ENCODE measurements at regions of chr3 and their contacts with region 1.

Region 1: DNA sequence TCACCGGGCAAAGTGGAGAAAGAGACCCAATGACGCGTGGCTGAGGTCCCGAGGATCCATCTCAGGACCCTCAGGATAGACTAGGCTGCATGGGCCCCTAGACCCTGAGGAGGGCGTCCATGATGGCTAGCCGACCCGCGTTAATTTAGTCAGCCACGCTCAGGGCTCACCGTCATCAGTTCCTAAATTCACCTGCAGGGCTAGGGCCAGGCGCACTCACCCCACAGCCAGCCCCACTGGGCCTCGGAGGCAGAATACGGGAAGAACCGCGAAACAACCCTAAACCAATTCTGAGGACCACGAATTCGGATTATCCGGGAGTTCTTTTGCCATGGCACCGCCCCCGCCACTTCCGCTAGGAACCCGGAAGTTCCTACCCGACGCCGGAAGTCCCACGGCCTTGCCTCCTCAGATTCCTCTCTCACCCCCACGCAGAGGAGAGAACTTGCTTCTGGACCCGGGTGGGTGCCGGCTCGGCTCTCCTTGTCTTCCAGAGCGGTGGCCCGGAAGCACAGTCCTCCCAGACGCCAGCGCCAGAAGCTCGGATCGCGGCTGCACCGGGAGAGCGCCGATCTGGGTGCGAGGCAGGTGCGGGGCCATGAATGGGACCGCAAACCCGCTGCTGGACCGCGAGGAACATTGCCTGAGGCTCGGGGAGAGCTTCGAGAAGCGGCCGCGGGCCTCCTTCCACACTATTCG is at the starts of genes EAF1 and METTL6:
- DNase-seq: peak; percentile 38
- ATAC-seq: peak; percentile 88
- H3K4me3 ChIP-seq: peak within 1 kb of the TSS; percentile 95
- H3K27ac ChIP-seq: peak within 1 kb of the TSS; percentile 81
- H3K4me1 ChIP-seq: no peaks in the 10 kb centered on the region; the same call in 1 of the 2 replicates
- H3K27me3 ChIP-seq: no peaks in the 10 kb centered on the region
- CTCF ChIP-seq: peak in 1 of 3 experiments; percentile 15; a peak in 1 of 6 replicates
- EP300 ChIP-seq: 0 out of 4 replicates have a peak, but pooled peaks of 1 of the 2 experiments have one; percentile 10
- POLR2A ChIP-seq: peak; percentile 85
- RAD21 ChIP-seq: no peak
- polyA plus RNA-seq, gene EAF1: 6.8 to 9.2 TPM
- polyA plus RNA-seq, gene METTL6: 27.4 to 29.6 TPM

Region 2: GRCh38 chr3:15023249-15023648 is 404.1 kb before region 1 on chr3:
- CTCF ChIA-PET with region 1: no interaction called
- POLR2A ChIA-PET with region 1: no interaction called
- RAD21 ChIA-PET with region 1: no interaction called
- SMC1A ChIA-PET with region 1: no interaction called
- in situ Hi-C with region 1: no loop called
- intact Hi-C with region 1: no loop called
- DNase-seq: no peak
- ATAC-seq: no peak
- H3K4me3 ChIP-seq: no peak overlapping the region
- H3K27ac ChIP-seq: no peak overlapping the region
- H3K4me1 ChIP-seq: no peaks in the 10 kb centered on the region
- H3K27me3 ChIP-seq: no peaks in the 10 kb centered on the region
- CTCF ChIP-seq: no peak
- EP300 ChIP-seq: no peak
- POLR2A ChIP-seq: no peak
- RAD21 ChIP-seq: no peak

Region 3: GRCh38 chr3:15500107-15500724 is 72.9 kb after region 1 on chr3:
- CTCF ChIA-PET with region 1: interaction called, 4 read pairs
- POLR2A ChIA-PET with region 1: no interaction called
- RAD21 ChIA-PET with region 1: no interaction called
- SMC1A ChIA-PET with region 1: interaction called, 11 read pairs
- in situ Hi-C with region 1: no loop called
- intact Hi-C with region 1: no loop called
- DNase-seq: no peak
- ATAC-seq: peak; percentile 66
- H3K4me3 ChIP-seq: no peak overlapping the region
- H3K27ac ChIP-seq: no peak overlapping the region
- H3K4me1 ChIP-seq: peaks cover 17% of the 10 kb centered on the region
- H3K27me3 ChIP-seq: no peaks in the 10 kb centered on the region
- CTCF ChIP-seq: no peak
- EP300 ChIP-seq: no peak
- POLR2A ChIP-seq: no peak
- RAD21 ChIP-seq: no peak

Region 4: DNA sequence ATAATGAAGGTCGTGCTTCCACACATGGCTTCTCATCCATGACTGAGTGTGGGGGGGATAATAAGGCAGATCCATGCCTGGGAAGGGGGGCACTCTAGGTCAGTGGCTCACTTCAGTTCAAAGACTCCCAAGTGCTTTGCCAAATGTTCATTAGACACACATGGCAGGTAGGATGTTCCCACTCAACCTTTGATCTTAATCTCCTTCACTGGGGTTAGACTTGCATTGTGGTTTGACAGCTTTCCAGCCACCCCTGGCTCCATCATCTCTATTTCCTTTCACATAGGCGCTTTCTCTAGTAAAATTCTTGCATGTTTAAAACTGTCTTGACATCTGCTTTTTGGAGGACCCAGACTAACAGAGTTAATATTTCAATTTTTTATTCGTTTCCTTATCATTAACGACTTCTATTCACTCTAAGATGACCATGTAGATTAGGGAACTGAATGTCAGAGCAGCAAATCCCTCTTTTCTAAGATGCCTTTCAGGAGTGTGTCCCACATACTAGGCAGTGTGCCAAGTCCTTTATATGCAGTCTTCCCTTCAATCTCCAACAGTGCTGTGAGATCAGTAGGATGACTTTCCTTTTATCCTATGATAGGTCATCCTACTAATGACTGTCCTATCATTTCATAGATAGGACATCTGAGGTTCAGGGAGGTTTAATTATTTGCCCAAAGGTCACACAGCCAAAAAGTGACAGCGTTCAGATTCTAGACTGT is 232.1 kb after region 1 on chr3:
- CTCF ChIA-PET with region 1: no interaction called
- POLR2A ChIA-PET with region 1: no interaction called
- RAD21 ChIA-PET with region 1: no interaction called
- SMC1A ChIA-PET with region 1: no interaction called
- in situ Hi-C with region 1: no loop called
- intact Hi-C with region 1: no loop called
- DNase-seq: no peak
- ATAC-seq: no peak
- H3K4me3 ChIP-seq: no peak overlapping the region
- H3K27ac ChIP-seq: no peak overlapping the region
- H3K4me1 ChIP-seq: no peaks in the 10 kb centered on the region
- H3K27me3 ChIP-seq: no peaks in the 10 kb centered on the region
- CTCF ChIP-seq: no peak
- EP300 ChIP-seq: no peak
- POLR2A ChIP-seq: no peak
- RAD21 ChIP-seq: no peak